ENCODE measurements at regions of chr16 and their contacts with region 1.

Region 1: GRCh38 chr16:1964506-1965395 is at the start of gene RPS2:
- DNase-seq: peak; percentile 99
- H3K4me3 ChIP-seq: peak within 1 kb of the TSS; percentile 85 to 95 (median 89)
- H3K27ac ChIP-seq: peak within 1 kb of the TSS; percentile 76
- H3K4me1 ChIP-seq: peaks cover 27% of the 10 kb centered on the region
- H3K27me3 ChIP-seq: no peaks in the 10 kb centered on the region
- CTCF ChIP-seq: no peak
- POLR2A ChIP-seq: peak; percentile 100
- total RNA-seq, gene RPS2: 2,793 and 3,036 TPM in 2 replicates

Region 2: DNA sequence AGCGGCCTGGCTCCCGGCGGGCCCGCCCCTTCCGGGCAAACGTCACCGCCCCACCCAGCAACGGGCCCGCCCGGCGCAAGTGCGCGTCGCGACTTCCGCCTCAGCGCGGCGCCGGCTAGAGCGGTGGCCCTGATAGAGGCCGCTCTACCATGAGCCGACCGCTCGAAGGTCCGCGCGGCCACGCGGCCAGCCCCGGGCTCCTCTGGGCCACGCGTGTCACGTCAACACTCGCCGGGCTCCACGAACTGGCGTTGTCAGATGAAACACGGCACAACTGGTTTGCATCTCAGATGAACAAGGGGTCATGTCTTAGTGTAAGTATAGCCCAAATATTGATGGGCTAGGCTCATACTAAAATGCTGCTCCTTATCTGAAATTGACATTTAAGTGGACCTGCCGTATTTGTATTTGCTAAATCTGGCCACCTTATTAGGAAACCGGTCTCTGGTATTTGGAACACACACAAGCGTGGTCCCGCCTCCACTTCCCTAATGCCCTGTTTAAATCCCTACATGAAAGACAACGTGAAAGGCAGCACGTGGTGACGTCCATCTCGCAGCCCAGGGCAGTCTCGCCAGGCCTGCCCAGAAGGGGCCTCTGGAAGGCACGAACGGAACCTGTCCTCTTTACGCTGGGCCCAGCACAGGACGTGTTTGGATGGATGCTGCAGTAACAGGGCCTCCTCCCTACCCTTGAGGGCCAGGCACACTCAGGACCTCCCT is 45.2 kb after region 1 on chr16 and contains the start of gene ZNF598:
- CTCF ChIA-PET with region 1: no interaction called
- POLR2A ChIA-PET with region 1: no interaction called
- dilution Hi-C with region 1: no loop called
- intact Hi-C with region 1: loop called (anchors 2 kb)
- DNase-seq: peak; percentile 72
- H3K4me3 ChIP-seq: peak within 1 kb of the TSS; percentile 72 to 85 (median 76)
- H3K27ac ChIP-seq: peak within 1 kb of the TSS; percentile 86
- H3K4me1 ChIP-seq: peaks cover 41% of the 10 kb centered on the region
- H3K27me3 ChIP-seq: no peaks in the 10 kb centered on the region
- CTCF ChIP-seq: no peak
- POLR2A ChIP-seq: peak; percentile 94
- total RNA-seq, gene ZNF598: 60.5 and 67.0 TPM in 2 replicates

Region 3: GRCh38 chr16:2033057-2033908 is 68.5 kb after region 1 on chr16:
- CTCF ChIA-PET with region 1: no interaction called
- POLR2A ChIA-PET with region 1: no interaction called
- dilution Hi-C with region 1: no loop called
- intact Hi-C with region 1: no loop called
- DNase-seq: peak; percentile 70
- H3K4me3 ChIP-seq: peak overlapping the region in 1 of 3 experiments; percentile 15
- H3K27ac ChIP-seq: peak overlapping the region; percentile 77
- H3K4me1 ChIP-seq: peaks cover 50% of the 10 kb centered on the region
- H3K27me3 ChIP-seq: no peaks in the 10 kb centered on the region
- CTCF ChIP-seq: no peak
- POLR2A ChIP-seq: peak; percentile 35